GM18951 (cell line): ENCODE measurements at regions of chr2 and their contacts with region 1.

Region 1: GRCh38 chr2:134119713-134120164 is 134.1 kb upstream of the MGAT5 start:
- POLR2A ChIP-seq: peak; percentile 75

Region 2: DNA sequence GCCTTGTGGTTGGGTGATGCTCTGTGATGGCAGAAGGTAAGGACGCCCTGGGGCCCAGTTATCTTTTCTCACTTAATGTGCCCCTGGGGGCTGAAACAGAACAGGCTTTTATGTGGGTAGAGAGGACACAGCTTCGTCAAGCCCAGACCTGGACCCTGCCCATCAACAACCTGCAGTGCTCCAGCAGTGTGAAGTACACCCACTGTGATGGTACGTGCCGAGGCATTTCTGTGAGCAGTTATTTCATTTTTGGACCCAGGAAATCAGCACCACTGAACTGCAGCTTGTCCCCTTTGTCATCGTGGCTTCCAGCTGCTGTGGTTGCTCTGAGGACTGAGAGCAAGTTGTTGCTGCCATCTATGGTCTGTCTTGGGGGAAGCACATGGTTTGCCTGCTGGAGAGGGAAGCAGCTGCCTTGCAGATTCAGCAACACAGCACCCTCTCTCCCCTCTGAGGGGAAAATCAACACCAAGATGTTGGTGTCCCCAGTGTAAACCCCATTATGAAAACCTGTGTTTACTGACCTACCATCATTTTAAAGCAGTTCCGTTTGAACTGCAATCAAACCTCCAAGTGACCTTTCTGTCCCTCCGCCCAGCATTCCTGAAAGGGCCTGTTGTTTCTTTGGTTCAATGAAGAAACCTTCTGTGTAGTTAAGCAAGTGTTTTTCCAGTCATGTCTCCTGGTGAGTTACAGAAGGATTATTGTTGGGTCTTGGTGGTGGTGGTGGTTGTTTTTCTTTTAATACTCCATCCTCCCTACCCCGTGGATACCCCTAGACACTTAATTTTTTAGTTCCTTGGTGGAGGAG is 292.3 kb after region 1 on chr2:
- in situ Hi-C with region 1: loop called (anchors 10 kb)
- POLR2A ChIP-seq: no peak